Endothelial cell of umbilical vein (primary cell): ENCODE measurements at regions of chr9 and their contacts with region 1.

Region 1: GRCh38 chr9:38008168-38009034 is 60.6 kb downstream of the SHB start:
- DNase-seq: peak; percentile 80
- H3K4me3 ChIP-seq: no peak overlapping the region
- H3K27ac ChIP-seq: peak overlapping the region; percentile 79
- H3K4me1 ChIP-seq: peaks cover 30% of the 10 kb centered on the region
- H3K27me3 ChIP-seq: no peaks in the 10 kb centered on the region
- CTCF ChIP-seq: no peak
- POLR2A ChIP-seq: no peak

Region 2: GRCh38 chr9:37876376-37876775 is 132.0 kb before region 1 on chr9:
- CTCF ChIA-PET with region 1: no interaction called
- POLR2A ChIA-PET with region 1: no interaction called
- dilution Hi-C with region 1: no loop called
- intact Hi-C with region 1: no loop called
- DNase-seq: no peak
- H3K4me3 ChIP-seq: no peak overlapping the region
- H3K27ac ChIP-seq: no peak overlapping the region
- H3K4me1 ChIP-seq: no peaks in the 10 kb centered on the region
- H3K27me3 ChIP-seq: no peaks in the 10 kb centered on the region
- CTCF ChIP-seq: no peak
- POLR2A ChIP-seq: no peak

Region 3: GRCh38 chr9:37963936-37964739 is 44.3 kb before region 1 on chr9:
- CTCF ChIA-PET with region 1: interaction called, 7 read pairs
- POLR2A ChIA-PET with region 1: no interaction called
- dilution Hi-C with region 1: no loop called
- intact Hi-C with region 1: loop called (anchors 2 kb)
- DNase-seq: peak; percentile 94
- H3K4me3 ChIP-seq: no peak overlapping the region
- H3K27ac ChIP-seq: peak overlapping the region; percentile 67
- H3K4me1 ChIP-seq: peaks cover 41% of the 10 kb centered on the region
- H3K27me3 ChIP-seq: no peaks in the 10 kb centered on the region
- CTCF ChIP-seq: no peak
- POLR2A ChIP-seq: no peak

Region 4: GRCh38 chr9:38026021-38026809 is 17.8 kb after region 1 on chr9:
- CTCF ChIA-PET with region 1: interaction called, 9 read pairs
- POLR2A ChIA-PET with region 1: interaction called, 3 read pairs
- dilution Hi-C with region 1: no loop called
- intact Hi-C with region 1: loop called (anchors 1 kb)
- DNase-seq: peak; percentile 98
- H3K4me3 ChIP-seq: no peak overlapping the region
- H3K27ac ChIP-seq: peak overlapping the region; percentile 97
- H3K4me1 ChIP-seq: peaks cover 35% of the 10 kb centered on the region
- H3K27me3 ChIP-seq: no peaks in the 10 kb centered on the region
- CTCF ChIP-seq: no peak
- POLR2A ChIP-seq: no peak